Activated CD4-positive, alpha-beta T cell treated with anti-CD3 and anti-CD28 coated beads for 36 hours (primary cell): ENCODE measurements at regions of chr2 and their contacts with region 1.

Region 1: DNA sequence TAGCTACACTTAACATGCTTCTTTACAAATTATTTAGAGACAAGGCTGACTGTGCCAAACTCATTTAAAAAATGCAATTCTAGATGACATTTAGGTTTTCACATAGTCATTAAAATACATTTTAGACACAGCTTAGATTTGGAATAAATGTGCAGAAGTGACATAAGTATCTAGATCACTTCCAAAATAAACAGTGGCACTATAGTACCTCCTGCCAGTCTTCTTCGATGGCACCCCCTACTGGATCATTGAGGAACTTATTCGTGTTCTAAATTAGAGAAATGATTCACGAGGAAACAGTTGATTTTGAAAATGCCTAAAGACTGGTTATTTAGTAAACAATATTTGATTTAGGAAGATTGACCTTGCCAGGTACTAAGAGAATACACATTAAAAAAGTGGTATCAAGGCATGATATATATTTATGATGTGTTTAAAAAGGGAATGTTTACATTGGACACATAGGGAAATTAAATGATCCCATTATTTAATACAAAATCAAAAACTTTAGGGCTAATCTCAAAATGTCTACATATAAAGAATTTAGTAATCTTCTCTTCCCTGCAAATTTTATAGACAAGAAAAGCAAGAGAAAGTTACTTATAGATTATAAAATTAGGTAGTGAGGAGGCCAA is 323.9 kb downstream of the XIRP2 start:
- DNase-seq: peak; percentile 41
- ATAC-seq: peak; percentile 53
- H3K4me3 Mint-ChIP-seq: no peak overlapping the region
- H3K27ac Mint-ChIP-seq: no peak overlapping the region
- H3K4me1 Mint-ChIP-seq: no peaks in the 10 kb centered on the region
- H3K27me3 Mint-ChIP-seq: peaks cover 4% of the 10 kb centered on the region

Region 2: GRCh38 chr2:166539340-166540162 is 672.6 kb before region 1 on chr2:
- CTCF ChIA-PET with region 1: interaction called, 3 read pairs
- POLR2A ChIA-PET with region 1: no interaction called
- intact Hi-C with region 1: loop called (anchors 1 kb)
- DNase-seq: peak; percentile 9
- ATAC-seq: peak; percentile 76
- H3K4me3 Mint-ChIP-seq: no peak overlapping the region
- H3K27ac Mint-ChIP-seq: no peak overlapping the region
- H3K4me1 Mint-ChIP-seq: peaks cover 2% of the 10 kb centered on the region
- H3K27me3 Mint-ChIP-seq: peaks cover 7% of the 10 kb centered on the region

Region 3: GRCh38 chr2:166700079-166700478 is 512.1 kb before region 1 on chr2:
- CTCF ChIA-PET with region 1: no interaction called
- POLR2A ChIA-PET with region 1: no interaction called
- intact Hi-C with region 1: loop called in 1 of 2 experiments (anchors 5 kb)
- DNase-seq: no peak
- ATAC-seq: no peak
- H3K4me3 Mint-ChIP-seq: no peak overlapping the region
- H3K27ac Mint-ChIP-seq: no peak overlapping the region
- H3K4me1 Mint-ChIP-seq: no peaks in the 10 kb centered on the region
- H3K27me3 Mint-ChIP-seq: no peaks in the 10 kb centered on the region

Region 4: DNA sequence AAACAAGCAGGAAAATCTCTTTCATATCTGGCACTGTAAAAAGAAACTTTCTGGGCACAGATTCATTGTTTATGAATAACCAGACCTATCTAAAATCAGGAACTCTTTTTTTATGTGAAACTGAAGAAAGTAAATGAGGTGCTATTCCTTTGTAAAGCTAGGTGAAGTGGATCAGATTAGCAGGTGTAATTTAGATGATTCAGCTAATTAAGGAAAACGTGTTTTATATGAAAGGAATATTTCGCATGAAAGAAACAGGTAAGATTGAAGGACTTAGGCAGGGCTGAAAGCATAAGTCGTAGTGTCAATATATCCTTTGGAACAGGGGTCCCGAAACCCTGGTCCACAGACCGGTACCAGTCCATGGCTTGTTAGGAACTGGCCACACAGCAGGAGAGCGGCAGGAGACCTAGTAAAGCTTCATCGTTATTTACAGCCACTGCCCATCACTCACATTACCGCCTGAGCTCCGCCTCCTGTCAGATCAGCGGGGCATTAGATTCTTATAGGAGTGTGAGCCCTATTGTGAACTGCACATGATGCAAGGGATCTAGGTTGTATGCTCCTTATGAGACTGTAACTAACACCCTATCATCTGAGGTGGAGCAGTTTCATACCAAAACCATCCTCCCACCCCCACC is 344.1 kb before region 1 on chr2:
- CTCF ChIA-PET with region 1: no interaction called
- POLR2A ChIA-PET with region 1: no interaction called
- intact Hi-C with region 1: no loop called
- DNase-seq: no peak
- ATAC-seq: no peak
- H3K4me3 Mint-ChIP-seq: no peak overlapping the region
- H3K27ac Mint-ChIP-seq: no peak overlapping the region
- H3K4me1 Mint-ChIP-seq: no peaks in the 10 kb centered on the region
- H3K27me3 Mint-ChIP-seq: no peaks in the 10 kb centered on the region

Region 5: DNA sequence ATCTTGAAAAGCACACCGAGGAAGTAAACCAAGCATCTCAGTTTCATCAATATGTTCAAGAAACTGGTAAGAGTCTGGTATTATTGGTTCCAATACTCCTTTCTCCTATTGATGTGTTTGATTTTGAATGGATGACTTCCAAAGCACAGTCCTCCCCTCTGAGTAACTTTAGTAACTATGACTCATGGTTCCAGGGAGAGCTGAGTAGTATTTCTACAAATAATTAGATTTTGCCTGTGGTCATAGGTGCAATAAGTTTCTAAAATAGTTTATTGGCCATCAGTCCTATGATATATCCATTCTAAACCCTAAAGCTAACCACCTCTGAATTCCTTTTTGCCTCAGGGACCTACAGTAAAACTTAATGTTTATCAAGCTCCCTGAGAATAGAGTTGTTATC is 28.5 kb after region 1 on chr2:
- CTCF ChIA-PET with region 1: no interaction called
- POLR2A ChIA-PET with region 1: no interaction called
- intact Hi-C with region 1: no loop called
- DNase-seq: no peak
- ATAC-seq: no peak
- H3K4me3 Mint-ChIP-seq: no peak overlapping the region
- H3K27ac Mint-ChIP-seq: no peak overlapping the region
- H3K4me1 Mint-ChIP-seq: no peaks in the 10 kb centered on the region
- H3K27me3 Mint-ChIP-seq: no peaks in the 10 kb centered on the region

Region 6: DNA sequence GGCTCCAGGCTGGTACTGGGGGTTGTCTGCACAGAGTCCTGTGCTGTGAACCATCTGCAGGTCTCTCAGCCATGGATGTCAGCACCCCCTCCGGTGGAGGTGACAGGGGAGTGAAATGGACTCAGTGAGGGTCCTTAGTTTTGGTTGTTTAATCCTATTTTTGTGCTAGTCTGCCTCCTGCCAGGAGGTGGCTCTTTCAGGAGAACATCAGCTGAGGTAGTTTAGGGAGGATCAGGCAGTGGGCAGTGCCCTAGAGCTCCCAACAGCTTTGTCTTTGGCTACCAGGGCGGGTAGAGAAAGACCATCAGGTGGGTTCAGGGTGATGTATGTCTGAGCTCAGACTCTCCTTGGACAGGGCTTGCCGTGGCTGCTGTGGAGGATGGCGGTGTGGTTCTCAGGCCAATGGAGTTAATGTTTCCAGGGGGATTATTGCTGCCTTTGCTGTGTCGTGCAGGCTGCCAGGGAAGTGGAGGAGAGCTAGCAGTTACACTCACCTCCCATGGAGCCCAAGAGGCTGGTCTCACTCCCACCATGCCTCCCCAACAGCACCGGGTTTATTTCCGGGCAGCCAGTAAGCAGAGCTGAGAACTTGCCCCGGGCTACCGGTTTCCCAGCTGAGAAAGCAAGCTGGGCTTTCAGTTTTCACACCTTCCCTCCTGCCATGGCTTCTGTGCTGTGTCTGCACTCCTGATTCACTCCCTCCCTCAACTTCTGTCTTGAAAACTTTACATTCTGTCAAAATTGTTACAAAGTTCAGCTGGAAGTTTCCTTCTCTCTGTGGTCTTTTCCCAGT is 239.6 kb after region 1 on chr2:
- CTCF ChIA-PET with region 1: no interaction called
- POLR2A ChIA-PET with region 1: no interaction called
- intact Hi-C with region 1: no loop called
- DNase-seq: no peak
- ATAC-seq: no peak
- H3K4me3 Mint-ChIP-seq: no peak overlapping the region
- H3K27ac Mint-ChIP-seq: no peak overlapping the region
- H3K4me1 Mint-ChIP-seq: no peaks in the 10 kb centered on the region
- H3K27me3 Mint-ChIP-seq: no peaks in the 10 kb centered on the region